Transverse colon (tissue), 4 donors: ENCODE measurements at regions of chr9 and their contacts with region 1.

Region 1: GRCh38 chr9:36258208-36258988 is at the start of gene GNE:
- DNase-seq: peak; percentile 98
- H3K4me3 ChIP-seq: peak within 1 kb of the TSS; percentile 59 to 92 (median 85)
- H3K27ac ChIP-seq: peak within 1 kb of the TSS; percentile 96 to 100 (median 99)
- H3K4me1 ChIP-seq: peaks cover 0 to 22% (median 12%) of the 10 kb centered on the region in 4 donors
- H3K27me3 ChIP-seq: no peaks in the 10 kb centered on the region
- CTCF ChIP-seq: no peak
- EP300 ChIP-seq: no peak
- POLR2A ChIP-seq: peak; percentile 85
- total RNA-seq, gene GNE: 32.2 to 122 (median 82.1) TPM

Region 2: DNA sequence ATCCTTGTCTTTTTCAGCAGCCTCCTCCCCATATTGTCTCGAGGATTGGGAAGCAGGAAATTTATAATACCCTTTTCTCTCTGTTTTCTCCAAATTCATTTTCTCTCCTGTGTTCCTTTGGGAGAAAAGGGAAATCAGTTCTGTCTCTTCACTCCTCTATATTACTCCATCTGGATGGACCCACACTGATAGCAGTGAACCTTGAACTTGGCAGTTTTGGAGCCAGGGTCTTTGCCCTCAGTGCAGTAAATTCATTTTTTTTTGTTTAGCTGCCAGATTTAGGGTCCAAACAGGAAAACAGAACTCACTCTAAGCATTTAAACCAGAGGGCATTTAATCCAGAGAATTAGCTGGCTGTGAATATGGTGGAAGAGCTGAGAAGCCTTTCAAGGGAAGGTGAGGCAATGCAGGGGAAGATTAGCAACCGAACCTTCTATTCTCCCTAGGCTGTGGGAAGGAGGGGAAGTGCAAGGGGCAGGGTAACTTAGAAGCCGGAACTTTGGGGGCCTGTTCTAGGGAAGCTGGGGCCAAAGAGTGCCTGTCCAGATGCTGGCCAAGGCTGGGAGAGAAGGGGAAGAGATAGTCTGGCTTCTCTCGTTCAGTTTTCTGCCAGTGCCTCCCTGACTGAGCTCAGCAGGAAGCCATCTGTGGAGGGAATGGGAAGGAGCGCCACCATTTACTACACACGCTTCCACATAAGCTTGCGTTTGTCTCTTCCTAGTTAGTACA is 483.3 kb before region 1 on chr9:
- in situ Hi-C with region 1: no loop called
- intact Hi-C with region 1: no loop called
- DNase-seq: no peak
- H3K4me3 ChIP-seq: no peak overlapping the region
- H3K27ac ChIP-seq: no peak overlapping the region
- H3K4me1 ChIP-seq: peaks cover 18 to 28% (median 20%) of the 10 kb centered on the region in 4 donors
- H3K27me3 ChIP-seq: no peaks in the 10 kb centered on the region
- CTCF ChIP-seq: no peak
- EP300 ChIP-seq: no peak
- POLR2A ChIP-seq: no peak

Region 3: GRCh38 chr9:36023260-36024048 is 234.9 kb before region 1 on chr9:
- in situ Hi-C with region 1: no loop called
- intact Hi-C with region 1: no loop called
- DNase-seq: peak; percentile 80
- H3K4me3 ChIP-seq: no peak overlapping the region
- H3K27ac ChIP-seq: no peak overlapping the region
- H3K4me1 ChIP-seq: no peaks in the 10 kb centered on the region
- H3K27me3 ChIP-seq: no peaks in the 10 kb centered on the region
- CTCF ChIP-seq: peak; percentile 70 to 86 (median 78)
- EP300 ChIP-seq: no peak
- POLR2A ChIP-seq: no peak

Region 4: GRCh38 chr9:36337865-36338264 is 79.5 kb after region 1 on chr9:
- in situ Hi-C with region 1: no loop called
- intact Hi-C with region 1: loop called (anchors 10 kb)
- DNase-seq: no peak
- H3K4me3 ChIP-seq: no peak overlapping the region
- H3K27ac ChIP-seq: no peak overlapping the region
- H3K4me1 ChIP-seq: no peaks in the 10 kb centered on the region
- H3K27me3 ChIP-seq: no peaks in the 10 kb centered on the region
- CTCF ChIP-seq: no peak
- EP300 ChIP-seq: no peak
- POLR2A ChIP-seq: no peak